Cardiac septum (tissue), 1 donor: ENCODE measurements at regions of chr4 and their contacts with region 1.

Region 1: GRCh38 chr4:87078987-87079486 is 141.4 kb downstream of the KLHL8 start:
- DNase-seq: no peak

Region 2: DNA sequence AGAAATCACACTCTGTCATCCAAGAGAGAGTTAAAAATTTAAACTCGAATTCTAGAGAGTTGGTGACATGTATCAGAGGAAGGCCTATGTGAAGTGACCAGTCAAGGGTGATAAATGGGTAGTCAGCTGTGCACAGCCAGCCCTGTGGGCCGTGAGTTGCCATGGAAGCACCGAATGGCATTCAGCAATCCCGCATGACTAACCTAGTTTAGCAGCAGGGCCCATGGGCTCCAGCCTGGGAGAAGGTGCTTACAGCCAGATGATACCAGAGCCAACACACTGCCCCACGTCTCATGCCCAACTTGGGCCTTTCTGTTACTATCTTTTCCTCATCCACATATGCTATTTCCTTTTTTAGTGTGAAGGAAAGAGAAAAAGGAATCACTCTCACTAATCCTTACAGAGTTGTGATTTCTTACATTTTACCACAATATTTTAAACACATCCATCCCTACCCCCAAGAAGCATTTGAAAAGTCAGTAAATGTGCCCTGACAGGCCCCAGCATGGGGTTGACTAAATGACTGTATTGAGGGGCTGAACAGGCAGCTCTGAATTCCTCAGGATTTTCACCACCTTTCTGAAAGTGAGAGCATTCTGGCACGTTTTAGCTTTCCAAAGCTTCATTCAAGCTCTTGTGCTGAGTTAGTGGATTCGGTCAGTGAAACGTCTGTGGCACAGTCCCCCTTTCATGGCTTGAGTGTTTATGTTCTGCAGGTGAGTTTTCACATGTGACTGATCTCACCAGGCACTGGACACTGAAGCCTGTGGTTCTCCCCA is 40.0 kb before region 1 on chr4:
- intact Hi-C with region 1: loop called (anchors 2 kb)
- DNase-seq: peak; percentile 89

Region 3: DNA sequence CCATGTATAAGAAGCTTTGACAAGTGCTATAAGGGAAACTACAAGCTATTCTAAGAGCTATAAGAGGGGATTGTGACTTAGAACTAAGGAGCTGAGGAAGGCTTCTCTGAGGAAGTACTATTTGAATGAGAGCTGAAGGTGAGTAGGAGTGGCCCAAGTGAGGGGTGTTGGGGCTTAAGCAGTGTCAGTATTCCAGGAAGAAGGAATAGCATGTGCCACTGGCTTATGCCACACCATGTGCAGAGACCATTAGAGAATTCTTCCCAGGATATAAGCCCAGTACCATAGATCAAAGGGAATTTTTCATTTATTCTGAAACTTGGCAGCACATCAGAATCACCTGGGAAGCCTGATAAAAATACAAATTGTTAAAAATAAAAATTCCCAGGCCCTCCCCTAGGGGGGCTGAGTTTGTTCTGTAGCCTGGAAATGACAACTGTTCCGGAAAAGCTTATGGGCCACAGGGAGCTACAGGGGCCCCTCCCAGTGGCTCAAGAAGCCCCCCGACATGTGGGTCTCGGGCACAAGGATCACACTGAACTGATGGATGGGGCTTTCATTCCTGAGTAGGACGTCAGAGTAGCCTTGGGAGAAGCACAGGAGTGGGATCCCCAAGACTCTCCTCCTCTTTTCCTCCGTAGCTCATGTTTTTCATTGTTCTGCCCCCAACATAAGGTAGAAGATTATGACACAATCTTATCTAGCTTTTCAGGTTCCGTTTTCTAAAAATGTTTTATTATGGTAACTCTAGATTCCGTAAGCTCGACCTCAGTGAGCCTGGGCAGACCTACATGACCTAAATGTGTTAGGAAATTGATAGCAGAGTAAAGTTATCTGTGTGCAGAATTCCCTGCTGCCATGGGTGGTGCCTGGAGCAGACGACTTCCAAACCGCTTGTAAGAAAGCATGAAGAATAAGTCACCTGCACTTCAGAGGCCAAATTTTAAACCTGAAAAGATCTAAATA is 25.0 kb before region 1 on chr4:
- intact Hi-C with region 1: loop called (anchors 2 kb)
- DNase-seq: no peak

Region 4: GRCh38 chr4:87108142-87108546 is 29.1 kb after region 1 on chr4:
- intact Hi-C with region 1: loop called (anchors 2 kb)
- DNase-seq: no peak